ENCODE measurements at regions of chr4 and their contacts with region 1.

Region 1: DNA sequence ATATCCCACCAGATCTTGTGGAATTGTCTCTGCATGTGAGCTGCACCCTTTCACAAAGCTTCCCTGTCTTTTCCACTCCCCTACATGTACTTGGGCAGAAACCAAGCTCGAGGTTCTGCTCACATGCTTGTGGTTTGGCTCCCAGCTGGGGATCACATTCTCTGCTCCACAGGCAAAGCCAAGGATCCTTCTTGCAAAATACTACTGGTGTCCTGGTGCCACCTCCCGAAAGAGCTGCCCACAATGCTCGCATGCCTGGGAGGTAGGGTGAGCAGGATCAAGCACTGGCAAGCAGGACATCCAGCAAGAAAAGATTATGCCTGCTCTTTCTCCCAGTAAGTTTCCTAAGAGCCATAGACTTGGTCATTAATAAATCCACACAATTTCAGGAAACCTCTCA is 45.1 kb upstream of the PPARGC1A start:
- DNase-seq: peak; percentile 76
- ATAC-seq: peak; percentile 68

Region 2: GRCh38 chr4:23368081-23368697 is 566.7 kb before region 1 on chr4:
- intact Hi-C with region 1: loop called (anchors 10 kb)
- DNase-seq: no peak
- ATAC-seq: peak; percentile 89